Right cardiac atrium (tissue), 5 donors: ENCODE measurements at regions of chr18 and their contacts with region 1.

Region 1: GRCh38 chr18:10519999-10520935 is 5.6 kb upstream of the NAPG start:
- DNase-seq: peak; percentile 88 to 93 (median 90)
- ATAC-seq: peak; percentile 85 to 87
- H3K4me3 ChIP-seq: no peak overlapping the region
- H3K27ac ChIP-seq: no peak overlapping the region
- H3K4me1 ChIP-seq: peaks cover 4% of the 10 kb centered on the region
- H3K27me3 ChIP-seq: no peaks in the 10 kb centered on the region

Region 2: DNA sequence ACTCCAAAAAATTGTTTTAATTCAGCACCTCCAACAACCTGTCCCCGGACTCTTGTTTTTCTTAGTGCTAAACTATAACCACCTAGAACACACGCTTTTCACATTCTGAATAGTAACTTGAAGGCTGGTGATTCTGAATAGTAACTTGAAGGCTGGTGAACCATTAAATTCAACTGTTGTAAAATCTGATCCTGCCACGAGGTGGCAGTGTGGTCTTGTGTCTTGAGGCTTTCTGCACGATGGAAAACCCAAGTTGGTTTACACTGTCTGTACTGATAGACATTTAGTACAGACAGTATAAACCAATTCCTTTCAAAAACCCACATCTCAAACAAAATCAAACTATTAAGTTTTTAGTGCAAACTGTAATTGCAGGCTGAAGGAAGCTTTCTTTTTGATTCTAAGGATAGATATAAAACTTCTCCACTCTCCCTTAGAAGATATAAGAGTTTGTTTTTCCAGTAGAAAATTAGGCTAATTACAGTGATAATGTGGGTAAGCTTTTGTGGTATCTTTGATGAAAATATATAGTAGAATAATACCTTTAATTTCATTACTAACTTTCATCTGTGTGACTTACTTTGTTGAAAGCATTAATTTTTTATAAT is 548.9 kb before region 1 on chr18:
- intact Hi-C with region 1: loop called (anchors 2 to 5 kb)
- DNase-seq: peak; percentile 57 to 79 (median 67)
- ATAC-seq: peak; percentile 54 to 57
- H3K4me3 ChIP-seq: no peak overlapping the region
- H3K27ac ChIP-seq: no peak overlapping the region
- H3K4me1 ChIP-seq: no peaks in the 10 kb centered on the region
- H3K27me3 ChIP-seq: no peaks in the 10 kb centered on the region

Region 3: DNA sequence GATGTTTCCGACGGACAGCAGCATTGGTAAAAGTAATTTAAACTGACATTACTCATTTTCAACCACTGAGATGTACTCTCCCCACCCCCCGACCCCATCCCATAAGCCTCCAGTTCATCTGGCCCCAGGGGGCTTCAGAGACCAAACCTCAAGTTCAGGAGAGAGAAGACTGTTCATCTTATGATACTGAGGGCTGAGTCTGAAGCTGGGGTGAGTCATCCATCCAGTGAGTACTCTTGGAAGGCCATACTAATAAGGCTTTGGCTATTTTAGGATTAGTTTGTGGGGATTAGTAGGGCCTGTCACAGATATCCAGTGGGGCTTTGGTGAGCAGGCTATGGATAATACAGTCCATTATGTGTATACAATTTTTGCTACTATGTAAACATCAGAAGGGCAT is 191.2 kb before region 1 on chr18:
- intact Hi-C with region 1: no loop called
- DNase-seq: no peak
- ATAC-seq: no peak
- H3K4me3 ChIP-seq: no peak overlapping the region
- H3K27ac ChIP-seq: no peak overlapping the region
- H3K4me1 ChIP-seq: no peaks in the 10 kb centered on the region
- H3K27me3 ChIP-seq: no peaks in the 10 kb centered on the region

Region 4: DNA sequence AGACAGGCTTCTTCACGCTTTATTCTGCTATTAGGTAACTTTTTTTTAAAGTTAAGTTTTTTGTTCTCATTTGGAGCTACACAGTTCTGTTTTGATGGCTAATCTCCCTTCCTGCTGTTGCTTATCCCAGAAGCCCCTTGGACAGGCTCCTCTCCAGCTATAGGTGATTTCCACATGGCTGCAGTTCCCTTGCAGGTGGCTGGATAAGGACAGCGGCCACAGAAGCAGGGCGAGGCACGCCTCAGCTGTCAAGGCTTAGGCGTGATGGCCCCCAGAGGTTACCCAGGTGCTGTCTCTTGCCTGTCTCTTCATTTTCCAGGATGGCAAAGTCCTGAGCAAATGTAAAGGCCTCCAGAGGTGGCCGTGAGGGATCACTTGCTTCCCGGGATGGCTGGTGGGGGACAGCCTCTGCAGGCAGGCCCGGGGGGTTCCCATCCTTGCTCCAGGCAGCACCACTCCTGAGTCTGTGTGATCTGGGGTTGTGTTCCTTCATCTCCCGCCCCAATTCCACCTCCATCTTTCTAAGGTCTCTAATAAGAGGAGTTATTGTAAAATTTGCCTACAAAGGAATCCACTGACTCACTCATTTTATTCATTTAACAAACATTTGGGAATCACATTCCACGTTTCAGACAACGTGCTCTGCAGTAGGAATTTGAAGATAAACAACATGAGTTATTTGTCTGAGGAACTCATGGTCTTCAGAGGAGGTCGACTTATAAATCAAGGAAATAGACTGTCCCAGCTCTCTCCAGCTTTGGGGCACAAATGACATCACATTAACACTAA is 59.0 kb after region 1 on chr18:
- intact Hi-C with region 1: no loop called
- DNase-seq: no peak
- ATAC-seq: no peak
- H3K4me3 ChIP-seq: no peak overlapping the region
- H3K27ac ChIP-seq: no peak overlapping the region
- H3K4me1 ChIP-seq: no peaks in the 10 kb centered on the region
- H3K27me3 ChIP-seq: no peaks in the 10 kb centered on the region